ENCODE measurements at regions of chr10 and their contacts with region 1.

Region 1: GRCh38 chr10:117216611-117217195 is 19.4 kb downstream of the KCNK18 start:
- DNase-seq: no peak
- ATAC-seq: peak; percentile 94
- H3K4me3 ChIP-seq: peak overlapping the region; percentile 52
- H3K27ac ChIP-seq: no peak overlapping the region
- H3K4me1 ChIP-seq: peaks cover 3% of the 10 kb centered on the region; the same call in 1 of the 2 replicates
- H3K27me3 ChIP-seq: no peaks in the 10 kb centered on the region; a peak in 2 of 4 replicates
- CTCF ChIP-seq: peak; percentile 99 to 100 (median 100)
- EP300 ChIP-seq: no peak
- POLR2A ChIP-seq: no peak
- RAD21 ChIP-seq: peak; percentile 90

Region 2: DNA sequence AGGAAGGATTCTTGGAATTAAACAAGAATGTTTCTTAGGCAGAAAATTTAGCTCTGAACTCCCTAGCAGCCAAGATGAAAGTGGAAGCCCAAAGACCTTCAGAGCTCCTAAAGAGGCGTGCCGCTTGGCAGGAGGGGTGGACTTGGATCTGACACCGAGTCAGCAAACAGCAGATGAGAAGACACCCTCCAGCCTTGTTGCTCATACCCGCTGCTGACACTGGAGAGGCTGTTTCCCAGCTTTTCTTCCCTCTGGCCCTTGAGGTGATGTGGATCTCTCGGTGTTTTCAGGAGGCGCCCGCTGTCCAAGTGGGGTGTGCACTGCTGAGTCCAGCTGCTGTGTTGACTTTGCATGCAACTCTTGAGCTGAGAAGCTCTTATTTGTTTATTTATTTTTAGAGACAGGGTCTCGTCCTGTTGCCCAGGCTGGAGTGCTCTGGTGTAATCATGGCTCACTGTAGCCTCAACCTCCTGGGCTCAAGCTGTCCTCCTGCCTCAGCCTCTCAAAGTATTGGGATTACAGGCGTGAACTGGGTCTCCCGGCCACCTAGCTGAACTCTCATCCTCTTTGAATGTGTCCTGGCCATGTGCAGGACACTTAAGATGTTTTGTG is 45.7 kb after region 1 on chr10:
- CTCF ChIA-PET with region 1: interaction called, 12 read pairs
- POLR2A ChIA-PET with region 1: no interaction called
- RAD21 ChIA-PET with region 1: no interaction called
- SMC1A ChIA-PET with region 1: no interaction called
- in situ Hi-C with region 1: no loop called
- intact Hi-C with region 1: no loop called
- DNase-seq: no peak
- ATAC-seq: no peak
- H3K4me3 ChIP-seq: no peak overlapping the region
- H3K27ac ChIP-seq: no peak overlapping the region
- H3K4me1 ChIP-seq: no peaks in the 10 kb centered on the region
- H3K27me3 ChIP-seq: peaks cover 0 to 3% of the 10 kb centered on the region in 2 experiments; a peak in 1 of 4 replicates
- CTCF ChIP-seq: no peak
- EP300 ChIP-seq: no peak
- POLR2A ChIP-seq: no peak
- RAD21 ChIP-seq: no peak

Region 3: DNA sequence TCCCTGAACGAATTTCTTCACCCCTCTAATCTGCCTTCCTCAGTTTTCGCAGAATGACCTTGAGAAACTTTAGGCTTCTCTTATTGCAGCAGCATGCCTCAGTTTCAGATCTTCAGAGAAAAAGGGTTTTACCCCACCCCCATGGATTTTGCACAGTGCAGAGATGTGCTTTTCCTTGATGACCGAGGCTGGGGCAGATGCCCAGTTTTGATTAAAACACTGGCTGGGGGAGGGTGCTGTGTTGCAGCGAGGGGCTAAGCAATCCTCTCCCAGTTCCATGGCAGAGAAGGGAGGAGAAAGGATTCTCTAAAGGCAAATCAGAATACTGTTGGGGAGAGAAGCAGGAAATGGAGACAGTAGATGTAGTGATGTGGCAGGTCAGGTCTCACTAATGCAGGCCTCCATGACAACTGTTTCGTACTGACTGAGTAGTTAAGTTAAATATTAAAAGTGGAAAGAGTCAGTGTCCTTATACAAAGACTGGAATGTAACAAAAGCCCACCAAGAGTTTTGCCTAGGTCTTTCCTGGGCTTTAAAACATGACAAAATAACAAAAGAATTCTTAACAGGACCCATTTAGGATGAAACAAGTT is 209.4 kb after region 1 on chr10:
- CTCF ChIA-PET with region 1: interaction called, 21 read pairs
- POLR2A ChIA-PET with region 1: no interaction called
- RAD21 ChIA-PET with region 1: interaction called, 9 read pairs
- SMC1A ChIA-PET with region 1: interaction called, 5 read pairs
- in situ Hi-C with region 1: no loop called
- intact Hi-C with region 1: no loop called
- DNase-seq: no peak
- ATAC-seq: peak; percentile 90
- H3K4me3 ChIP-seq: no peak overlapping the region
- H3K27ac ChIP-seq: no peak overlapping the region
- H3K4me1 ChIP-seq: no peaks in the 10 kb centered on the region
- H3K27me3 ChIP-seq: no peaks in the 10 kb centered on the region
- CTCF ChIP-seq: no peak
- EP300 ChIP-seq: no peak
- POLR2A ChIP-seq: no peak
- RAD21 ChIP-seq: no peak

Region 4: DNA sequence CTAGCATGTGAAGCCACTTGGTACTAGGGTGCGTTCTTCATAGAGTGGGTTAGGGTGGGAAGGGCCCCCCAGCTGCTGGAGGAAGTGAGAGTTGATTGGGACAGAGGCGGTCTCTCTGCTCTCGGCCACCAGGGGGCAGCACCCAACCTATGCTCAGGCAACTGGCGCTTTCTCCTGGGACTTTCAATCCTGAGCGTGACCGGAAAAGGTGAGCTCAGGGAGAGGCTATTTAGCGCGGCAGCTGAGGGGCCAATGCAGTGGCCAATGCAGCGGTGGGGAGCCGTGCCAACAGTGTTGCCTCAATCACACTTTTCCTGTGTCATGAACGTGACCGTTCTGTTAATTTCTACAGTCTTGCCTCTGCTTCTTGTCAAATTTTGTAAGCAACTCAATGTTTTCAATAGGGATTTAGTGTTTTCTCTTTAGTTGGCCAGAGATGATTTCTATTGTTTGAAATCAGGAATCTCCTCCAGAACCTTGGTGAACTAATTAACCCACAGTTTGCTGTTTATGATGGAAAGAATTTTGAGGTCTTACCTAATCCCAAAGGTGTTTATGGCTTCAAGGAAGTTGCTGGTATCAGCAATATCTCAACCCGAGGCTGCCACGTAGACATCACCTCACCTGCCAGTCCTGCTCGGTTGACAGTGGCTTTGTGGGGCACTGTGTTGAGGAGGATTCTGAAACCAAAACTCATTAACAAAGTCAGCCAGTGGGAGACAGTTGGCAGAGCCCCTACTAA is 226.4 kb after region 1 on chr10:
- CTCF ChIA-PET with region 1: interaction called, 11 read pairs
- POLR2A ChIA-PET with region 1: no interaction called
- RAD21 ChIA-PET with region 1: interaction called, 14 read pairs
- SMC1A ChIA-PET with region 1: interaction called, 5 read pairs
- in situ Hi-C with region 1: no loop called
- intact Hi-C with region 1: loop called (anchors 5 kb)
- DNase-seq: peak; percentile 16
- ATAC-seq: peak; percentile 90
- H3K4me3 ChIP-seq: no peak overlapping the region
- H3K27ac ChIP-seq: no peak overlapping the region
- H3K4me1 ChIP-seq: 0 out of 2 replicates have a peak, but pooled peaks cover 5% of the 10 kb centered on the region
- H3K27me3 ChIP-seq: no peaks in the 10 kb centered on the region; a peak in 1 of 4 replicates
- CTCF ChIP-seq: peak; percentile 70 to 80 (median 79)
- EP300 ChIP-seq: no peak
- POLR2A ChIP-seq: no peak
- RAD21 ChIP-seq: peak; percentile 35

Region 5: GRCh38 chr10:117477961-117478670 is 261.4 kb after region 1 on chr10:
- CTCF ChIA-PET with region 1: interaction called, 8 read pairs
- POLR2A ChIA-PET with region 1: no interaction called
- RAD21 ChIA-PET with region 1: interaction called, 8 read pairs
- SMC1A ChIA-PET with region 1: interaction called, 4 read pairs
- in situ Hi-C with region 1: no loop called
- intact Hi-C with region 1: loop called (anchors 10 kb)
- DNase-seq: no peak
- ATAC-seq: 0 out of 3 replicates have a peak, but pooled peaks have one; percentile 7
- H3K4me3 ChIP-seq: no peak overlapping the region
- H3K27ac ChIP-seq: no peak overlapping the region
- H3K4me1 ChIP-seq: 0 out of 2 replicates have a peak, but pooled peaks cover 4% of the 10 kb centered on the region
- H3K27me3 ChIP-seq: no peaks in the 10 kb centered on the region; a peak in 1 of 4 replicates
- CTCF ChIP-seq: peak in 2 of 3 experiments; percentile 8 to 10; a peak in 1 of 6 replicates
- EP300 ChIP-seq: no peak
- POLR2A ChIP-seq: no peak
- RAD21 ChIP-seq: no peak

Region 6: DNA sequence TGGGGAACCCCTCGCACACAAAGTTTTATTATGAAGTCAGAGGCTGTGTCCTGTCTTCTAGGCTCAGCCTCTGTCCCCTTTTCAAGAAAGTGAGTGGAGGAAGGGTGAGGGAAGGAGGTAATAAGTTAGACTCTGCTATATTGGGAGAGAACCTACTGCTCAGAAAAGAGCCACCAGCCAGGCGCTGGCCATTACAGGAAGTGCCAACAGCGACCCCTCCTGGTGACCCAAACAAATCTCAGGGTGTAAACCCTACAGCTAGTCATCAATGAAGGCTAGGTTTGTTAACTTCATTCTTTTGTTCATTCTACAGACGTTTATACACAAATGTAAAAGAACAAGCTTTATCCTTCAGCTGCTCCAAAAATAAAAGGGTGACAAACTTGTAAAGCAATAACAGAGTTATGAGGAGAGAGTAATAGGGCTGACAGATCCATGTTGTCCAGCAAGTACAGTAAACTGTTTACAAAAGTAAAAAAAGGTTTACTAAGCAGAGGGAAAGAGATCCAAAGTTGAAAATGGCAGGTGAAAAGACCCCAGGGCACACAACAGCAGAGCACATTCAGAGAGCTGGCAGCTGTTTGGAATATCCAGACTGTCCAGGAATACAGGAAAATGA is 1042.7 kb after region 1 on chr10:
- CTCF ChIA-PET with region 1: interaction called, 17 read pairs
- POLR2A ChIA-PET with region 1: no interaction called
- RAD21 ChIA-PET with region 1: interaction called, 7 read pairs
- SMC1A ChIA-PET with region 1: interaction called, 4 read pairs
- in situ Hi-C with region 1: no loop called
- intact Hi-C with region 1: no loop called
- DNase-seq: no peak
- ATAC-seq: peak; percentile 79
- H3K4me3 ChIP-seq: no peak overlapping the region
- H3K27ac ChIP-seq: no peak overlapping the region
- H3K4me1 ChIP-seq: no peaks in the 10 kb centered on the region
- H3K27me3 ChIP-seq: peaks cover 0 to 1% of the 10 kb centered on the region in 2 experiments; a peak in 2 of 4 replicates
- CTCF ChIP-seq: peak; percentile 60 to 65 (median 62)
- EP300 ChIP-seq: no peak
- POLR2A ChIP-seq: no peak
- RAD21 ChIP-seq: peak; percentile 32

Measured in GM12878 (cell line).